ENCODE measurements at regions of chr13 and their contacts with region 1.

Region 1: DNA sequence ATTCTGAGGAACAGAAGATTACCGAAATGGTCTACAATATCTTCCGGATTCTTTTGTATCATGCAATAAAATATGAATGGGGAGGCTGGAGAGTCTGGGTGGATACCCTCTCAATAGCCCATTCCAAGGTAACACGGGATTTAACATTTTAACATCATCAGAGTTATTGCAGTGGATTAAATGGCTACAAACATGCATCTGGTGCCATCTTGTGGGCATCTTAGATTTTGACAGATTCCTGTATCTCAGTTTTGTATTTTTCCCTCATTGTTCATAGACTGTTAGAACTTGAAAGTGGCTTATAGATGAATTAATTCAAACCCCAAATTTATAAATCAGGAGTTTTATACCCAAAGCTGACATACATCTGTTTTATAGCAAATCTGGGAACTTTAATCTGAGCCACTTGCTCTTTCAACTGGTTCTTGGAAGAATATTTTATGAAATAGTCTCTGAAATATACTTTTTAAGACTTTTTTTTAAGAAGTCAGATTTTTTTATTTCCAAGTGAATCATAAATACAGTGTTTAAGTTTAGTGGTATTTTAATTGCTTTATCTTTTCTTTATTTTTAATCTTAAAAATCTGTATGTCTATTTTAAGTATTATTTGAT is 215.2 kb downstream of the NBEA start:
- DNase-seq: peak; percentile 18
- H3K4me3 ChIP-seq: no peak overlapping the region
- H3K27ac ChIP-seq: no peak overlapping the region
- H3K4me1 ChIP-seq: peaks cover 0 to 5% (median 0%) of the 10 kb centered on the region in 4 donors
- H3K27me3 ChIP-seq: no peaks in the 10 kb centered on the region
- CTCF ChIP-seq: peak; percentile 65 to 79 (median 67)
- EP300 ChIP-seq: no peak
- POLR2A ChIP-seq: no peak

Region 2: DNA sequence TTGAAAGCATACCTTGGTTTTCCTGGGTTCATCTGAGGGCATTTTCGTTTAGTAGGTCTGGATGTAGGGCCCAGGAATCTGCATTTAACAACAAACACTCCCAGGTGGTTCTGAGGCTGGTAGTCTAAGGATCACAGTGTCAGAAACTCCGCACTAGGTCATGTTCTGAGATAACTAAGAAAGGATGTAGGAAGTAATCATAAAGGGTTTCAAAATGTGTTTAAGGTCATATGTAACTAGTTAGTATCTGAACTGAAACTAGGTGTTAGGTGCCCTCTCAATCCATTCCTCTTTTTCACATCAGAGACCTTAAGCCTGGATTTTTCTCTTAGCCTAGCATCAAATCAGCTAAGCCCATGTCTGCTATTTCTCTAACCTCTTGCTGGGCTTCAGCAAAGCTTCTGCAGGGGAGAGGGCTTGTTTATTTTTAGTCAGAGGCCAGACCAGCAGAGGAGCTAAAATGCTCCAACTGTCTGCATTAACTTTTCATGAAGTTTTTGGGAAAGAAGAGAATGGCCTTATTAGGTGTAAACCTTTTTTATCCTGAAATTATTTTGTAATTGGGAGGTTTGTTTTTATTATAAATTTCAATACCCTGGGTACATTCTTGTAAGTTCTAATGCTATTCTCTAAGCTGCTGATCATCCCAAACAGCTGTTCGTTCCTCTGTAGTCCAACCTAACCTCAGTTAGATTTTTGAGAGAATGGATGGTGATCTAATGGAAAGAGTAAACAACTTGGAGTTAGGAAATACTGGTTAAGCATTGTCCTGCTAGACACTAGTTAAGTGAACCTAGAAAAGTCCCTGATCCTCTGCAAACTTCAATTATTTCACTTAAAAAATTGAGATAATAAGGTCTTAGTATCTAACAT is 1602.1 kb before region 1 on chr13:
- in situ Hi-C with region 1: loop called in 1 of 4 experiments (anchors 25 kb)
- intact Hi-C with region 1: no loop called
- DNase-seq: no peak
- H3K4me3 ChIP-seq: no peak overlapping the region
- H3K27ac ChIP-seq: no peak overlapping the region
- H3K4me1 ChIP-seq: no peaks in the 10 kb centered on the region
- H3K27me3 ChIP-seq: no peaks in the 10 kb centered on the region
- CTCF ChIP-seq: no peak
- EP300 ChIP-seq: no peak
- POLR2A ChIP-seq: no peak

Region 3: DNA sequence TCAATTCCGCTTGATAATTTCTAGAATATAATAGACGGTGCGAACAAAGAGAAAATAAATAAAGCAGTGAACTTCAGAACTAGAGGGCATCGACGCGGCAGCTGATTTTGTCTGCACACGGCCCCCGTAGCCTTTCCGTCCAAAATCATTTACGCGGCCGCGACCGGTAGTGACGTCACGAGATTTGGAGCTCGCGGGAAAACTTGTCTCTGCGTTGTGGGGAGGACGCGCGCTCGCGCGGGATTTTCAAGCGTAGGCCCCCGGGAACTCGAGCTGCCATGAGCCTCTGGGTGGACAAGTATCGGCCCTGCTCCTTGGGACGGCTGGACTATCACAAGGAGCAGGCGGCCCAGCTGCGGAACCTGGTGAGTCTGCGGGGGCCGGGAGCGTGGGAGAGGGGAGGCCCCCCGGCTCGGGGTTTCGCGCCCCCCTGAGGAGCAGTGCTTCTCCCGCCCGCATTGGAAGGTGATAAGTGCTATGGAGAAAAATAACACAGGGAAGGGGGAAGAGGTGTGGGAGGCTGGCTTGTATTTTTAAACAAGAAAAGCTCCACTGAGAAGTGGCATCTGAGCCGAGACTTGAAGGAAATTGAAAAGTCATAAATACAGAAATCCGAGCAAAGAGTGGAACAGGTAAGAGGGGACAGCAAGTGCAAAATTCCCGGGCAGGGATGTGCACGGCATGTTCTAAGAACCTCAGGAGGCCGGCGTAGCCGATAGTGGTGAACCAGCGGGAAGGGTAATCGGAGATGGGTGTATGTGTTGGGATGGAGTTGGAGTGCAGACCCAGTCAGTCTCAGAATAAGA is 1339.1 kb before region 1 on chr13 and contains the start of gene RFC3:
- in situ Hi-C with region 1: loop called in 1 of 4 experiments (anchors 25 kb)
- intact Hi-C with region 1: no loop called
- DNase-seq: peak; percentile 94
- H3K4me3 ChIP-seq: peak within 1 kb of the TSS; percentile 40 to 88 (median 73)
- H3K27ac ChIP-seq: peak within 1 kb of the TSS; percentile 56 to 75 (median 67)
- H3K4me1 ChIP-seq: peaks cover 0 to 11% (median 6%) of the 10 kb centered on the region in 4 donors
- H3K27me3 ChIP-seq: peaks cover 5% of the 10 kb centered on the region
- CTCF ChIP-seq: no peak
- EP300 ChIP-seq: no peak
- POLR2A ChIP-seq: peak; percentile 14
- total RNA-seq, gene RFC3: 3.3 to 62.5 (median 4.4) TPM in 3 of 4 donors, not detected in the other

Region 4: DNA sequence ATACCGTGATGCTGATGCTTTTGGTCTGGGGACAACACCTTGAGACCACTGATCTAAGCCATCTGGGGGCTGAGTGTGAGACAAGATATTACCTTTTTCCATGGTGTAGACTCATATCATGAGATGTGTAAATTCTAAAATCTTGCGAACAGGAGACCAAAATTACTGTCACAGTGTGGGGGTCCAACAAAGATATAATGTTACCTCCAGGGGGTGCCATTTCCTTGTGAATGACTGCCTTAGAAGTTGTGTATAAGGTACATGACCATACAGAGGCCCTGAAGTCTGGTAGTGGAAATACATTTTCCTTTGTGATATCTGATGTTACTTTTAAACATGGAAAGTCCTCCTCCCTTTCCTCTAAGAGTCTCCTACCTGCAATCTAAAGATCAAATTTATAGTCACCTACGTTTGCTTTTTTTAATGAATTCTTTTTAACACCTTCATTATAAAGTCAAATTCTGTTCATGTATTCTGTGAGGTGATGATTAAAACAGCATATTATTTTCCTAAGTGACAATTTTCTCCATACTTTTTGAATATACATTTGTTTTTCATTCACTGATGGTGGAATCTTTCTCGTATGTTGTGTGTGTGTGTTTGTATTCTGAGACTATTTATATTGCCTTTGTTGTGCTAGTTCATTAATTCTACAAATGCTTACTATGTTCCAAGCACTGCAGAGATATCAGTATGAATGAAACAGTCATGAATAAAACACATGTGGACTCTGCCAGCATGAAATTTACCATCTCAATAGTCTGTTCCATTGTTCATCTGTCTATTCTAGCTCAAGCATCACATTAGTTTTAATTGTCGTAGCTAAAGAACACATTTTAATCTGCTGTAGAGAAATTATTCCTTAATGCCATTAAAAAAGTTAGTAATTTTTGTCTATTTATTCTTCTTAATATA is 1225.6 kb before region 1 on chr13:
- in situ Hi-C with region 1: loop called (anchors 10 to 25 kb)
- intact Hi-C with region 1: loop called (anchors 10 kb)
- DNase-seq: no peak
- H3K4me3 ChIP-seq: no peak overlapping the region
- H3K27ac ChIP-seq: no peak overlapping the region
- H3K4me1 ChIP-seq: peaks cover 0 to 3% (median 0%) of the 10 kb centered on the region in 4 donors
- H3K27me3 ChIP-seq: no peaks in the 10 kb centered on the region
- CTCF ChIP-seq: peak; percentile 38 to 61 (median 52)
- EP300 ChIP-seq: no peak
- POLR2A ChIP-seq: no peak

Region 5: DNA sequence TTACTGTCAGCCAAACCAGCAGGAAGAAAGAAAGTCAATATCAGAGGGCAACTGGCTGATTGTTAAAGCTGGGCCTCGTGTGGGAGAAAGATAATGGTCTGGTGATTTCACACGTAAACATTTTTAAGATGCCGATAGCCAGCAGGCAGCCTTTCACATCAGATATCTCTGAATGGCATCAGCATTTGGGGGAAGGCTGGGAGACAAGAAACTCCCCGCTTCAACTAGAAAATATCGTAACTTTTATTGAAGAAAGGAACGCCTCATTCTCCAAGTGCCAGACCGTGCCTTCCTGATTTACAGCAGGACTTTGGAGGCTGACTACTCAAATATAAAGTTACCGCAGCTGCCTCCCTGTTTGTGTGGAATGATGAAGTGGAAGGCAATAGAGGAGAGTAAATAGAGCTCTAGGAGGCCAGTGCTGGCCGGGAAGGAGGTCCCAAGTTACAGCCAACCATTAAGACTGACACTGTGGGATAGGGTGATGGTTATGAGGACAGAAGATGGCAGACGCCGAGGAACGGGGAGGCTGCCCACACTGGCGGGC is 603.6 kb after region 1 on chr13:
- in situ Hi-C with region 1: no loop called
- intact Hi-C with region 1: no loop called
- DNase-seq: no peak
- H3K4me3 ChIP-seq: no peak overlapping the region
- H3K27ac ChIP-seq: no peak overlapping the region
- H3K4me1 ChIP-seq: no peaks in the 10 kb centered on the region
- H3K27me3 ChIP-seq: no peaks in the 10 kb centered on the region
- CTCF ChIP-seq: no peak
- EP300 ChIP-seq: no peak
- POLR2A ChIP-seq: no peak